K562 (cell line): ENCODE measurements at regions of chr2 and their contacts with region 1.

Region 1: DNA sequence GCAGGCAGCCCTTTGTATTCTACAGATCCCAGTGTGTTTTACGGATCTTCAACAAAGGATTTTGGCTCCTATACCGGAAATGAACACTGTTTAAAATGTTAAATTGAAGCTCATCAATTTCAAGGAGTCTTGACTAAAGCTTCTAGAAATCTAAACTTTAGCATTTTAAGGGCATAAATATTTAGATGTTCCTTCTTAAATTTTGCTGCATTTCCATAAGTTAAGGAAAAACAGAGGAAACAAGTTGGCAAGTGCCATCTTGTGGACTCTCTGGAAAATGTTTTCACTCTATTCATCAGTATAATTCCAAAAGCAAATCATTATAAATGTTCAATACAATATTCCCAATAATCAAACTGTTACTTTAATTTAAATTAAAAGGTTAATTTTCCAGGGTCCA is 19.6 kb downstream of the CHN1 start:
- DNase-seq: peak in 1 of 4 experiments; percentile 11
- ATAC-seq: no peak
- H3K4me3 ChIP-seq: no peak overlapping the region
- H3K27ac ChIP-seq: no peak overlapping the region
- H3K4me1 ChIP-seq: no peaks in the 10 kb centered on the region
- H3K27me3 ChIP-seq: no peaks in the 10 kb centered on the region
- CTCF ChIP-seq: peak in 2 of 3 experiments; percentile 42 to 63; a peak in 3 of 6 replicates
- EP300 ChIP-seq: no peak
- POLR2A ChIP-seq: no peak
- RAD21 ChIP-seq: peak; percentile 55 to 78

Region 2: DNA sequence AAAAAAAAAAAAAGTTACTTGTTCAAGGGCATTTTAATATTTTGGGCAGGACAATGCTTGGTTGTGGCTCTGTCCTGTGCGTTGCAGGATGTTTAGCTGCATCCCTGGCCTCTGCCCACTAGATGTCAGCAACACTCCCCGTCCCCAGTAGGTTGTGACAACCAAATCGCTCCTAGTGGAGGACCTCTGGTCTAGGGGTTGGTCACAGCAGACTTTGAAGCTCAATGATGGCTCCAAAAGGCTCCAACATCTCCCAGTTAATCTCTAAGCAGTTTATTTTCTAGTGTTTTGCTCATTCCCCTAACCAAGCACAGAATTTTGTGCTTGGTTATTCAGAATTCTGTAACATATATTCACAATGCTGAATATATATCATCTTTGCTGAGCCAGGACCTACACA is 288.4 kb before region 1 on chr2:
- CTCF ChIA-PET with region 1: interaction called, 3 read pairs
- POLR2A ChIA-PET with region 1: no interaction called
- in situ Hi-C with region 1: no loop called
- intact Hi-C with region 1: loop called (anchors 2 kb)
- DNase-seq: peak; percentile 62 to 78 (median 66)
- ATAC-seq: peak; percentile 99
- H3K4me3 ChIP-seq: no peak overlapping the region
- H3K27ac ChIP-seq: no peak overlapping the region
- H3K4me1 ChIP-seq: no peaks in the 10 kb centered on the region
- H3K27me3 ChIP-seq: peaks cover 0 to 25% of the 10 kb centered on the region in 2 experiments; a peak in 2 of 5 replicates
- CTCF ChIP-seq: peak; percentile 87 to 97 (median 89)
- EP300 ChIP-seq: no peak
- POLR2A ChIP-seq: no peak
- RAD21 ChIP-seq: peak; percentile 50 to 66

Region 3: GRCh38 chr2:174748948-174749347 is 236.7 kb before region 1 on chr2:
- CTCF ChIA-PET with region 1: interaction called, 11 read pairs
- POLR2A ChIA-PET with region 1: no interaction called
- in situ Hi-C with region 1: no loop called
- intact Hi-C with region 1: loop called (anchors 2 kb)
- DNase-seq: peak; percentile 70 to 85 (median 78)
- ATAC-seq: peak; percentile 97
- H3K4me3 ChIP-seq: no peak overlapping the region
- H3K27ac ChIP-seq: no peak overlapping the region
- H3K4me1 ChIP-seq: no peaks in the 10 kb centered on the region
- H3K27me3 ChIP-seq: peaks cover 8 to 35% of the 10 kb centered on the region in 2 experiments
- CTCF ChIP-seq: peak; percentile 82 to 86 (median 83)
- EP300 ChIP-seq: no peak
- POLR2A ChIP-seq: no peak
- RAD21 ChIP-seq: peak; percentile 46 to 72

Region 4: GRCh38 chr2:174771631-174772471 is 213.8 kb before region 1 on chr2:
- CTCF ChIA-PET with region 1: interaction called, 11 read pairs
- POLR2A ChIA-PET with region 1: no interaction called
- in situ Hi-C with region 1: loop called (anchors 10 kb)
- intact Hi-C with region 1: loop called (anchors 1 kb)
- DNase-seq: peak; percentile 57 to 74 (median 66)
- ATAC-seq: peak; percentile 99
- H3K4me3 ChIP-seq: no peak overlapping the region
- H3K27ac ChIP-seq: no peak overlapping the region
- H3K4me1 ChIP-seq: no peaks in the 10 kb centered on the region
- H3K27me3 ChIP-seq: peaks cover 0 to 21% of the 10 kb centered on the region in 2 experiments; a peak in 3 of 5 replicates
- CTCF ChIP-seq: peak; percentile 88 to 96 (median 89)
- EP300 ChIP-seq: no peak
- POLR2A ChIP-seq: no peak
- RAD21 ChIP-seq: peak; percentile 85 to 90

Region 5: GRCh38 chr2:174971865-174972781 is 13.5 kb before region 1 on chr2:
- CTCF ChIA-PET with region 1: no interaction called
- POLR2A ChIA-PET with region 1: no interaction called
- in situ Hi-C with region 1: no loop called
- intact Hi-C with region 1: no loop called
- DNase-seq: no peak
- ATAC-seq: no peak
- H3K4me3 ChIP-seq: no peak overlapping the region
- H3K27ac ChIP-seq: no peak overlapping the region
- H3K4me1 ChIP-seq: no peaks in the 10 kb centered on the region
- H3K27me3 ChIP-seq: peaks cover 0 to 9% of the 10 kb centered on the region in 2 experiments; a peak in 3 of 5 replicates
- CTCF ChIP-seq: no peak
- EP300 ChIP-seq: no peak
- POLR2A ChIP-seq: no peak
- RAD21 ChIP-seq: no peak